ENCODE measurements at regions of chr17 and their contacts with region 1.

Region 1: DNA sequence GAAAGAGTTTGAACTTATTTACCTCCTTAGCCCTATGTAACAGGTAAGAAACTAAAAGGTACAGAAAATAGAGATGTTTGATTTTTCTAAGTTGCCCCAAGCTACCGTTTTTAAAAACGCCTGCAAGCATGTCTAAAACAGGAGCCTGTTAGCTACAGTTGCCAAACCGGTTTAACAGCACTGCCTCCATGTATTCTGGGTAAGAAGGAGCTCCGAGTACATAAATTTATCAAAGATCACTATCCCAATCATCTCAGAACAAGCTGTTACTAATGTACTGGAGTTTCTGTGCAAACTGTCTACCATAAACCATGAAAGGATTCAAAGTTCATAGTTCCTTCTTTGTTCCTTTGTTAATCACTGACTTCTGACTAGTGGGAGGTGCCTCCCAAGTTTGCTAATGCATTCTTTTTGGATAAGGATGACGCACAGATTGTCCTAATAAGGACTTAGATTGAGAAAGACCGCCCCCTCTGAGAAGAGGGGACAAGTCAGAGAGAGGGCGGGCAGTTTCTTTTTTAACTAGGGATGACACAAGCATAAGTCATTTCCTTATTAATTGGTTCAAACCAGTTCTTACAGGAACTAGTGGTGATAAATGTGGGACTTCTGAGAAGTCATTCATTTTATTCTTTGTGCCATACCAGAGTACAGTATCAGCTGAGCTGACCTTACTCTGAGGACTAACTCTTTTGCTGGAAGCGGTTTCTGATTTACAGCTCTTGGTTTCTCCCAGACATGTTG is 55.3 kb downstream of the TUBD1 start:
- DNase-seq: peak; percentile 100
- ATAC-seq: peak; percentile 86
- H3K4me3 ChIP-seq: peak overlapping the region; percentile 79 to 94 (median 80)
- H3K27ac ChIP-seq: peak overlapping the region; percentile 99
- H3K4me1 ChIP-seq: peaks cover 41% of the 10 kb centered on the region
- H3K27me3 ChIP-seq: peaks cover 0 to 5% of the 10 kb centered on the region in 2 experiments; a peak in 1 of 5 replicates
- CTCF ChIP-seq: no peak
- EP300 ChIP-seq: peak; percentile 90 to 96
- POLR2A ChIP-seq: peak; percentile 90 to 100
- RAD21 ChIP-seq: 0 out of 2 replicates have a peak, but pooled peaks have one; percentile 10

Region 2: GRCh38 chr17:59490216-59490615 is 347.3 kb before region 1 on chr17:
- CTCF ChIA-PET with region 1: no interaction called
- POLR2A ChIA-PET with region 1: no interaction called
- in situ Hi-C with region 1: no loop called
- intact Hi-C with region 1: no loop called
- DNase-seq: no peak
- ATAC-seq: no peak
- H3K4me3 ChIP-seq: no peak overlapping the region
- H3K27ac ChIP-seq: no peak overlapping the region
- H3K4me1 ChIP-seq: peaks cover 24% of the 10 kb centered on the region
- H3K27me3 ChIP-seq: peaks cover 2 to 15% of the 10 kb centered on the region in 2 experiments; a peak in 4 of 5 replicates
- CTCF ChIP-seq: no peak
- EP300 ChIP-seq: no peak
- POLR2A ChIP-seq: no peak
- RAD21 ChIP-seq: no peak

Region 3: GRCh38 chr17:59707114-59707970 is 130.1 kb before region 1 on chr17 and contains the starts of genes PTRH2 and VMP1:
- CTCF ChIA-PET with region 1: no interaction called
- POLR2A ChIA-PET with region 1: interaction called, 53 read pairs
- in situ Hi-C with region 1: no loop called
- intact Hi-C with region 1: no loop called
- DNase-seq: peak; percentile 100
- ATAC-seq: peak; percentile 96
- H3K4me3 ChIP-seq: peak within 1 kb of the TSS; percentile 83 to 98 (median 91)
- H3K27ac ChIP-seq: peak within 1 kb of the TSS; percentile 94
- H3K4me1 ChIP-seq: peaks cover 75% of the 10 kb centered on the region
- H3K27me3 ChIP-seq: peaks cover 0 to 5% of the 10 kb centered on the region in 2 experiments; a peak in 1 of 5 replicates
- CTCF ChIP-seq: no peak
- EP300 ChIP-seq: peak; percentile 1 to 28; a peak in 2 of 4 replicates
- POLR2A ChIP-seq: peak; percentile 91 to 99
- RAD21 ChIP-seq: no peak; the same call in 1 of the 2 replicates
- total RNA-seq, gene PTRH2: 48.7 and 67.7 TPM in 2 replicates
- total RNA-seq, gene VMP1: 80.3 and 186 TPM in 2 replicates

Region 4: GRCh38 chr17:59762513-59763374 is 74.7 kb before region 1 on chr17:
- CTCF ChIA-PET with region 1: no interaction called
- POLR2A ChIA-PET with region 1: interaction called, 22 read pairs
- in situ Hi-C with region 1: loop called (anchors 5 kb)
- intact Hi-C with region 1: no loop called
- DNase-seq: no peak
- ATAC-seq: no peak
- H3K4me3 ChIP-seq: no peak overlapping the region
- H3K27ac ChIP-seq: peak overlapping the region; percentile 76
- H3K4me1 ChIP-seq: peaks cover 37% of the 10 kb centered on the region
- H3K27me3 ChIP-seq: no peaks in the 10 kb centered on the region
- CTCF ChIP-seq: no peak
- EP300 ChIP-seq: no peak
- POLR2A ChIP-seq: no peak
- RAD21 ChIP-seq: no peak

Region 5: GRCh38 chr17:59786536-59787319 is 50.8 kb before region 1 on chr17:
- CTCF ChIA-PET with region 1: no interaction called
- POLR2A ChIA-PET with region 1: interaction called, 501 read pairs
- in situ Hi-C with region 1: loop called (anchors 5 kb)
- intact Hi-C with region 1: loop called (anchors 1 kb)
- DNase-seq: peak; percentile 100
- ATAC-seq: peak; percentile 97
- H3K4me3 ChIP-seq: peak overlapping the region in 1 of 3 experiments; percentile 51; a peak in 2 of 6 replicates
- H3K27ac ChIP-seq: peak overlapping the region; percentile 97
- H3K4me1 ChIP-seq: peaks cover 94% of the 10 kb centered on the region
- H3K27me3 ChIP-seq: no peaks in the 10 kb centered on the region
- CTCF ChIP-seq: peak; percentile 20
- EP300 ChIP-seq: peak; percentile 93 to 100
- POLR2A ChIP-seq: peak; percentile 65 to 86
- RAD21 ChIP-seq: no peak

Region 6: DNA sequence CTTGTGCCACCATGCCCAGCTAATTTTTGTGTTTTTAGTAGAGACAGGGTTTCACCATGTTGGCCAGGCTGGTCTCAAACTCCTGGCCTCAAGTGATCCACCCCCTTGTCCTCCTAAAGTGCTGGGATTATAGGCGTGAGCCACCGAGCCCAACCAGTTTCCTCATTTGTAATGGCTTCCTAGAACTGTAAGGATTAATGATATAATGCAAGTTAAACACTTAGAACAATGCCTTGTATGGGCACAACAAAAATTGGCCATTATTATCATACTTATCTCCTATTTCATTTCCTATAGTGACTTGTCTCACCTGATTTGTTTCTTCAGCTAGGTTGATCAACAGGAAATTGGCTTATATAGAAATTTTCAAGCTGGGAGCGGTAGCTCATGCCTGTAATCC is 41.1 kb after region 1 on chr17:
- CTCF ChIA-PET with region 1: no interaction called
- POLR2A ChIA-PET with region 1: no interaction called
- in situ Hi-C with region 1: no loop called
- intact Hi-C with region 1: no loop called
- DNase-seq: no peak
- ATAC-seq: no peak
- H3K4me3 ChIP-seq: no peak overlapping the region
- H3K27ac ChIP-seq: no peak overlapping the region
- H3K4me1 ChIP-seq: no peaks in the 10 kb centered on the region
- H3K27me3 ChIP-seq: no peaks in the 10 kb centered on the region
- CTCF ChIP-seq: no peak
- EP300 ChIP-seq: no peak
- POLR2A ChIP-seq: no peak
- RAD21 ChIP-seq: no peak

Region 7: GRCh38 chr17:59892924-59893676 is 55.6 kb after region 1 on chr17 and contains the starts of genes RPS6KB1 and TUBD1:
- CTCF ChIA-PET with region 1: no interaction called
- POLR2A ChIA-PET with region 1: interaction called, 10 read pairs
- in situ Hi-C with region 1: no loop called
- intact Hi-C with region 1: no loop called
- DNase-seq: peak; percentile 99
- ATAC-seq: peak; percentile 98
- H3K4me3 ChIP-seq: peak within 1 kb of the TSS; percentile 64 to 98 (median 86)
- H3K27ac ChIP-seq: peak within 1 kb of the TSS; percentile 77
- H3K4me1 ChIP-seq: peaks cover 52% of the 10 kb centered on the region
- H3K27me3 ChIP-seq: no peaks in the 10 kb centered on the region; a peak in 1 of 5 replicates
- CTCF ChIP-seq: no peak; the same call in 1 of the 2 replicates
- EP300 ChIP-seq: no peak
- POLR2A ChIP-seq: peak; percentile 96 to 98
- RAD21 ChIP-seq: peak; percentile 31; the same call in 1 of the 2 replicates
- total RNA-seq, gene RPS6KB1: 42.2 and 44.3 TPM in 2 replicates
- total RNA-seq, gene TUBD1: 25.9 and 38.7 TPM in 2 replicates

Region 8: GRCh38 chr17:59918975-59919530 is 81.6 kb after region 1 on chr17:
- CTCF ChIA-PET with region 1: no interaction called
- POLR2A ChIA-PET with region 1: no interaction called
- in situ Hi-C with region 1: no loop called
- intact Hi-C with region 1: no loop called
- DNase-seq: no peak
- ATAC-seq: no peak
- H3K4me3 ChIP-seq: no peak overlapping the region
- H3K27ac ChIP-seq: no peak overlapping the region
- H3K4me1 ChIP-seq: no peaks in the 10 kb centered on the region
- H3K27me3 ChIP-seq: no peaks in the 10 kb centered on the region
- CTCF ChIP-seq: no peak
- EP300 ChIP-seq: no peak
- POLR2A ChIP-seq: no peak
- RAD21 ChIP-seq: no peak

Measured in HepG2 (cell line).